ENCODE measurements at regions of chr9 and their contacts with region 1.

Region 1: DNA sequence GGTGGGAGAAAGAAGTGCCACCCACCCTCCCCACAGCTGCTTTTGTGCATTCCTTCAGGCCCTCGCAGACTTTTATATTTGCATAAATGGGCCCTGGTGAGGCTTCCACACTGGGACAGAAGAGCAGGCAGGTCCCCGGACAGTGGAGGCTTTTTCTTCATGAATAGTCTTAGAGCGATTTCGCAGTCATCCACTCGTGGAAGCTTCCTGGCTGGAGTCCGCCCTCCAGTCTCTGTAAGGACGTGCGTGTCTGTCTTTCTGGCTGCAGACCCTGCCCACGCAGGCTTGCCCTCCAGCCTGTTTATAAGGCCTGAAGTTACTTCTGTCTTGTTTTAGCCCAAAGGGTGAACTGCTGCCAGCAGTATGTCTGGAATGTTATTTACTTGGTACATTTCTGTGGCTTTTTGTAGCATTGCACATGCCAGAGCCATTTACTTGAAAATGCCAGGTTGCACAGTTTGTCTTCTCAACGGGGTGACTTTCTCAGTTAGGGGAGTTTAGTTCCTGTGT is 195.7 kb downstream of the AOPEP start:
- DNase-seq: peak; percentile 77
- H3K4me3 ChIP-seq: no peak overlapping the region
- H3K27ac ChIP-seq: peak overlapping the region; percentile 69 to 75
- H3K4me1 ChIP-seq: peaks cover 3% of the 10 kb centered on the region
- H3K27me3 ChIP-seq: no peaks in the 10 kb centered on the region
- CTCF ChIP-seq: no peak
- POLR2A ChIP-seq: no peak

Region 2: DNA sequence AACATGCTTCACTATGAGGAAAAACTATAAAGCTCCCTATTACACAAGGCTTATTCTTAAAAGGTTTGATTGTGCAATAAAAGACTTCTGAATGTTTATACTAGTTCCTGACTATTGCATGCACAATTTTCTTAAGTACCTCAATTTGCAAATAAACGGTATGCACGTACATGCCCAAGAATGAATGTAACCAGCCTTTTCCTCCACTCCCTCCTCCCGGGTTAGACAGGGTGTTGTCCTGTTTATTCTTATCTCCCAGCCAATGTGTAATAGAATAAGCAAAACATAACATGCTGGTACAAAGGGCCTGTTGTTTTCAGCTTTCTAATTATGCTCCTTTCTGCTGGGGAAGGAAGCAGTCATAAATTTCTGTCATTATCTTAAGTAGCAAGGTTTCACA is 116.6 kb before region 1 on chr9:
- intact Hi-C with region 1: loop called (anchors 5 kb)
- DNase-seq: peak; percentile 69
- H3K4me3 ChIP-seq: no peak overlapping the region
- H3K27ac ChIP-seq: peak overlapping the region; percentile 50 to 65
- H3K4me1 ChIP-seq: no peaks in the 10 kb centered on the region
- H3K27me3 ChIP-seq: no peaks in the 10 kb centered on the region
- CTCF ChIP-seq: no peak
- POLR2A ChIP-seq: no peak

Region 3: GRCh38 chr9:94827584-94828304 is 94.4 kb before region 1 on chr9:
- intact Hi-C with region 1: loop called (anchors 5 kb)
- DNase-seq: peak; percentile 10
- H3K4me3 ChIP-seq: no peak overlapping the region
- H3K27ac ChIP-seq: peak overlapping the region; percentile 66 to 72
- H3K4me1 ChIP-seq: peaks cover 8% of the 10 kb centered on the region
- H3K27me3 ChIP-seq: no peaks in the 10 kb centered on the region
- CTCF ChIP-seq: no peak
- POLR2A ChIP-seq: no peak

Region 4: GRCh38 chr9:94867281-94867841 is 54.8 kb before region 1 on chr9:
- intact Hi-C with region 1: loop called (anchors 2 kb)
- DNase-seq: peak; percentile 67
- H3K4me3 ChIP-seq: no peak overlapping the region
- H3K27ac ChIP-seq: peak overlapping the region; percentile 79 to 83
- H3K4me1 ChIP-seq: no peaks in the 10 kb centered on the region
- H3K27me3 ChIP-seq: no peaks in the 10 kb centered on the region
- CTCF ChIP-seq: no peak
- POLR2A ChIP-seq: peak; percentile 17

Region 5: DNA sequence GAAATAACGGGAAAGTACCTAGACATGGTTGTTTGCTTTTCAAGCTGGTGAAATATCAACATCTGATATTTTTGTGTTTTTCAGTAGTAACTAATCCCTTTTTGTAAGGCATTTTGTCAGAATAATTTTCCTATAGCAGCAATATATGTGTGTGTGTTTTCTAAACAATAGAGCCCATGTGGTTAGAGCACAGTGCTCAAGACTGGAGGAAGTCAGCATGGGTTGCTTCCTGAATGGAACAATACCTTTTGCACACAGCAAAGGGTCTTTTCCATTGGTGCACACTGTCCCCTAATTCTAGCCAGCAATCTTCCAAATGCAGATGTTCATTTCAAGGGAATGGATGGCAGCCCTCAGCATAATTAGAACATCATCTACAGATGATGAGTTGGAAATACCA is 74.5 kb after region 1 on chr9:
- intact Hi-C with region 1: loop called (anchors 2 kb)
- DNase-seq: no peak
- H3K4me3 ChIP-seq: no peak overlapping the region
- H3K27ac ChIP-seq: peak overlapping the region; percentile 75 to 94
- H3K4me1 ChIP-seq: no peaks in the 10 kb centered on the region
- H3K27me3 ChIP-seq: no peaks in the 10 kb centered on the region
- CTCF ChIP-seq: no peak
- POLR2A ChIP-seq: no peak

Region 6: GRCh38 chr9:95004411-95005277 is 82.5 kb after region 1 on chr9:
- intact Hi-C with region 1: loop called (anchors 2 kb)
- DNase-seq: peak; percentile 60
- H3K4me3 ChIP-seq: peak overlapping the region; percentile 64 to 71
- H3K27ac ChIP-seq: peak overlapping the region; percentile 94 to 96
- H3K4me1 ChIP-seq: peaks cover 3% of the 10 kb centered on the region
- H3K27me3 ChIP-seq: no peaks in the 10 kb centered on the region
- CTCF ChIP-seq: peak in 1 of 4 experiments; percentile 8
- POLR2A ChIP-seq: peak; percentile 30